CD8-positive, alpha-beta T cell (primary cell): ENCODE measurements at regions of chr4 and their contacts with region 1.

Region 1: GRCh38 chr4:147866532-147867271 is 134.8 kb downstream of the ARHGAP10 start:
- DNase-seq: peak; percentile 85 to 97 (median 92)
- ATAC-seq: peak; percentile 99
- H3K4me3 ChIP-seq: no peak overlapping the region
- H3K4me3 Mint-ChIP-seq: no peak overlapping the region
- H3K27ac ChIP-seq: no peak overlapping the region
- H3K27ac Mint-ChIP-seq: no peak overlapping the region
- H3K4me1 ChIP-seq: no peaks in the 10 kb centered on the region
- H3K4me1 Mint-ChIP-seq: no peaks in the 10 kb centered on the region
- H3K27me3 ChIP-seq: no peaks in the 10 kb centered on the region
- H3K27me3 Mint-ChIP-seq: no peaks in the 10 kb centered on the region
- CTCF ChIP-seq: peak; percentile 99

Region 2: GRCh38 chr4:146342600-146343192 is 1524.0 kb before region 1 on chr4:
- CTCF ChIA-PET with region 1: no interaction called
- POLR2A ChIA-PET with region 1: no interaction called
- intact Hi-C with region 1: loop called in 1 of 2 experiments (anchors 5 kb)
- DNase-seq: peak in 4 of 9 experiments; percentile 7 to 57 (median 34)
- ATAC-seq: no peak
- H3K4me3 ChIP-seq: no peak overlapping the region
- H3K4me3 Mint-ChIP-seq: no peak overlapping the region
- H3K27ac ChIP-seq: no peak overlapping the region
- H3K27ac Mint-ChIP-seq: no peak overlapping the region
- H3K4me1 ChIP-seq: no peaks in the 10 kb centered on the region
- H3K4me1 Mint-ChIP-seq: peaks cover 2% of the 10 kb centered on the region
- H3K27me3 ChIP-seq: no peaks in the 10 kb centered on the region
- H3K27me3 Mint-ChIP-seq: no peaks in the 10 kb centered on the region
- CTCF ChIP-seq: peak; percentile 77

Region 3: GRCh38 chr4:147590249-147590920 is 276.3 kb before region 1 on chr4:
- CTCF ChIA-PET with region 1: interaction called, 20 read pairs
- POLR2A ChIA-PET with region 1: no interaction called
- intact Hi-C with region 1: loop called in 1 of 2 experiments (anchors 5 kb)
- DNase-seq: peak in 6 of 9 experiments; percentile 10 to 53 (median 38)
- ATAC-seq: no peak
- H3K4me3 ChIP-seq: no peak overlapping the region
- H3K4me3 Mint-ChIP-seq: no peak overlapping the region
- H3K27ac ChIP-seq: no peak overlapping the region
- H3K27ac Mint-ChIP-seq: no peak overlapping the region
- H3K4me1 ChIP-seq: no peaks in the 10 kb centered on the region
- H3K4me1 Mint-ChIP-seq: peaks cover 5% of the 10 kb centered on the region
- H3K27me3 ChIP-seq: no peaks in the 10 kb centered on the region
- H3K27me3 Mint-ChIP-seq: peaks cover 4% of the 10 kb centered on the region
- CTCF ChIP-seq: peak; percentile 62

Region 4: GRCh38 chr4:147693218-147693617 is 173.5 kb before region 1 on chr4:
- CTCF ChIA-PET with region 1: interaction called, 60 read pairs
- POLR2A ChIA-PET with region 1: no interaction called
- intact Hi-C with region 1: no loop called
- DNase-seq: no peak
- ATAC-seq: no peak
- H3K4me3 ChIP-seq: no peak overlapping the region
- H3K4me3 Mint-ChIP-seq: no peak overlapping the region
- H3K27ac ChIP-seq: no peak overlapping the region
- H3K27ac Mint-ChIP-seq: no peak overlapping the region
- H3K4me1 ChIP-seq: peaks cover 5% of the 10 kb centered on the region
- H3K4me1 Mint-ChIP-seq: peaks cover 5% of the 10 kb centered on the region
- H3K27me3 ChIP-seq: no peaks in the 10 kb centered on the region
- H3K27me3 Mint-ChIP-seq: peaks cover 22% of the 10 kb centered on the region
- CTCF ChIP-seq: no peak

Region 5: DNA sequence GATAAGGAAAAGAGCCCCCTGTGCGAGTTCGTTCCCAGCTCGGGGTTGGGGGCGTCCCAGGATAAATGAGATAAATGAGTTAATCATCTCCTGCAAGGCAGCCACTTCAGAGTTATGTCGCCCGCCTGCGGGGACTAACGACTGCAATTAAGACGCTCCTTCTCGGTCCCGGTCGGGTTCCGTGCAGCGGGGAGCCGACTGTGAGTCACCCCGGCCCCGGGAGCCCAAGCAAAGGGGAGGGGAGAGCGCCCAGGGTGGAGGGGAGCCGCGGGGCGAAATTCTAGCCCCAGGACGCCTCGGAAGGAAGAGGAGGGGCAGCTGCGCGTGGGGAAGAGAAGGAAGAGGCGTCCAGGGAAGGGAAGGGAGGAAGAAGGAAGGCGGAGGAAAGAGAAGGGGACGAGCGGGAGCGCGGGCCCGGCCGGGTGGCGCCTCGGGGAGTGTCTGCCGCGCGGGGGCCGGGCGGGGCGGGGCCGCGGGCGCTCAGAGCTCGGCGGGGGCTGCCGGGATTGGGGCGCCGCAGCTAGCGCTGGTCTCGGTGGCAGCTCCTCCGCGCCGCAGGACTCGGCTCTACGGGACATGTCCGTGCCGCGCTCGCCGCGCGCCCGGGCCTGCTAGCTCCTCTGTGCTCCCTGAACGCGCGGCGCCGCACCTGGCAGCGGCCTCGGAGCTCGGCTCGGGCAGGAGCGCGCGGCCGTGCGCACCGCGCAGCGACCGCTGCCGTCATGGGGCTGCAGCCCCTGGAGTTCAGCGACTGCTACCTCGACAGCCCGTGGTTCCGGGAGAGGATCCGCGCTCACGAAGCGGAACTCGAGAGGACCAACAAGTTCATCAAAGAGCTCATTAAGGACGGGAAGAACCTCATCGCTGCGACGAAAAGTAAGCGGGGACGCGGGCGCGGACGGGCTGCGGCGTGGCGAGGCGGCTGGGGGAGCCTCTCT is 134.9 kb before region 1 on chr4 and contains the start of gene ARHGAP10:
- CTCF ChIA-PET with region 1: interaction called, 49 read pairs
- POLR2A ChIA-PET with region 1: no interaction called
- intact Hi-C with region 1: loop called in 1 of 2 experiments (anchors 1 kb)
- DNase-seq: peak; percentile 18 to 79 (median 72)
- ATAC-seq: peak; percentile 66
- H3K4me3 ChIP-seq: peak within 1 kb of the TSS; percentile 91
- H3K4me3 Mint-ChIP-seq: peak within 1 kb of the TSS; percentile 90
- H3K27ac ChIP-seq: peak within 1 kb of the TSS; percentile 55 to 60
- H3K27ac Mint-ChIP-seq: peak within 1 kb of the TSS; percentile 83
- H3K4me1 ChIP-seq: peaks cover 18% of the 10 kb centered on the region
- H3K4me1 Mint-ChIP-seq: peaks cover 32% of the 10 kb centered on the region
- H3K27me3 ChIP-seq: no peaks in the 10 kb centered on the region
- H3K27me3 Mint-ChIP-seq: peaks cover 2% of the 10 kb centered on the region
- CTCF ChIP-seq: no peak
- total RNA-seq, gene ARHGAP10: 7.2 to 7.4 TPM

Region 6: DNA sequence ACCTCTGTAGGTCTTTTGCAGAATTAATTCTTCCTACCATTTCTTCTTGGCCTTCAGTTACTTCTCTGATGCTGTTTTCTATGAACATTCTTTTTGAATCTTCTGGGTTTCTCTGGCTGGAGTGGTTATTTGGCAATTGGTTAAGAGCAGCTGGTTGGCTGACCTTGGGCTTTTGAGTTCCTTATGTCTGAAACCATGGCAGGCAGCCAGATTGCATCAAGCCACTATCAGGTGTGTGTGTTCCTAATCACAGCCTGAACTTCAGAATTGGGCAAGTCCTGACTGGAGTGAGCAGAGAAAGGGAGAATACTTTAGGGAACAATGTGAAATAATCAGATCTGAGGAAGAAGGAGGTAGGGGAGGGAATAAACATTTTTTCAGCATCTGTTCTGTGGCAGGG is 44.6 kb before region 1 on chr4:
- CTCF ChIA-PET with region 1: interaction called, 23 read pairs
- POLR2A ChIA-PET with region 1: no interaction called
- intact Hi-C with region 1: no loop called
- DNase-seq: no peak
- ATAC-seq: no peak
- H3K4me3 ChIP-seq: no peak overlapping the region
- H3K4me3 Mint-ChIP-seq: no peak overlapping the region
- H3K27ac ChIP-seq: no peak overlapping the region
- H3K27ac Mint-ChIP-seq: no peak overlapping the region
- H3K4me1 ChIP-seq: no peaks in the 10 kb centered on the region
- H3K4me1 Mint-ChIP-seq: no peaks in the 10 kb centered on the region
- H3K27me3 ChIP-seq: no peaks in the 10 kb centered on the region
- H3K27me3 Mint-ChIP-seq: no peaks in the 10 kb centered on the region
- CTCF ChIP-seq: no peak

Region 7: DNA sequence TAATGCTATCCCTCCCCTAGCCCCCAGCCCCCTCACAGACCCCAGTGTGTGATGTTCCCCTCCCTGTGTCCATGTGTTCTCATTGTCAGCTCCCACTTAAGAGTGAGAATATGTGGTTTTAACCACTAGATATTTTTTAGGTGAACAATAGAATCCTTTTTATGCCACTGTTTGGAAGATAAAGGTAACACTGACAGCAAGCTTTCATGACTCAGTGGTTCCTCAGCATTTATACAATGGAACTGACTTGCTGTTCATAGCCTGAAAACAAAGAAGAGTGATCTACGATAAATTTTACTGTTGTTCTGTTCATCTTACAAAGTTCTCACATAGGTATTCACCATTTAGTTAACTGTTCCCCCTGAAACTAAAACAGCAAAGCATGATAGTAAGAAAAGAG is 13.0 kb after region 1 on chr4:
- CTCF ChIA-PET with region 1: interaction called, 24 read pairs
- POLR2A ChIA-PET with region 1: interaction called, 3 read pairs
- intact Hi-C with region 1: no loop called
- DNase-seq: no peak
- ATAC-seq: no peak
- H3K4me3 ChIP-seq: no peak overlapping the region
- H3K4me3 Mint-ChIP-seq: no peak overlapping the region
- H3K27ac ChIP-seq: no peak overlapping the region
- H3K27ac Mint-ChIP-seq: no peak overlapping the region
- H3K4me1 ChIP-seq: no peaks in the 10 kb centered on the region
- H3K4me1 Mint-ChIP-seq: no peaks in the 10 kb centered on the region
- H3K27me3 ChIP-seq: no peaks in the 10 kb centered on the region
- H3K27me3 Mint-ChIP-seq: no peaks in the 10 kb centered on the region
- CTCF ChIP-seq: no peak